ENCODE measurements at regions of chr22 and their contacts with region 1.

Region 1: GRCh38 chr22:27994481-27995331 is 75.7 kb upstream of the PITPNB start:
- DNase-seq: no peak
- H3K4me3 ChIP-seq: no peak overlapping the region
- H3K27ac ChIP-seq: no peak overlapping the region
- H3K4me1 ChIP-seq: no peaks in the 10 kb centered on the region
- H3K27me3 ChIP-seq: no peaks in the 10 kb centered on the region
- CTCF ChIP-seq: no peak

Region 2: DNA sequence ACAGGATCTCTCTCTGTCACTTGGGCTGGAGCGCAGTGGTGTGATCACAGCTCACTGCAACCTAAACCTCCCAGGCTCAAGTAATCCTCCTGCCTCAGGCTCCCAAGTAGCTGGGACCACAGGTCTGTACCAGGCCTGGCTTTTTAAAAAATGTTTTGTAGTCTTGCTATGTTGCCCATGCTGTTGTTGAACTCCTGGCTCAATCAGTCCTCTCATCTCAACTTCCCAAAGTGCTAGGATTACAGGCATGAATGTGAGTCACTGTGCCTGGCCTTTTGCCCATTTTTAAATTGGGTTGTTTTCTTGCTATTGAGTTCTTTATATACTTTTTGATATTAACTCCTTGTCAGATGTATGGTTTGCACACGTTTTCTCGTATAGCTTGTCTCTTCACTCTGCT is 42.6 kb before region 1 on chr22:
- CTCF ChIA-PET with region 1: no interaction called
- POLR2A ChIA-PET with region 1: interaction called, 16 read pairs
- intact Hi-C with region 1: no loop called
- DNase-seq: peak; percentile 59
- H3K4me3 ChIP-seq: no peak overlapping the region
- H3K27ac ChIP-seq: no peak overlapping the region
- H3K4me1 ChIP-seq: peaks cover 13% of the 10 kb centered on the region
- H3K27me3 ChIP-seq: no peaks in the 10 kb centered on the region
- CTCF ChIP-seq: no peak

Measured in A673 (cell line).